ENCODE measurements at regions of chr1 and their contacts with region 1.

Region 1: GRCh38 chr1:66331657-66332547 is 202.1 kb upstream of the SGIP1 start:
- DNase-seq: peak; percentile 85
- ATAC-seq: peak; percentile 77
- H3K4me3 ChIP-seq: peak overlapping the region; percentile 55
- H3K27ac ChIP-seq: peak overlapping the region; percentile 86
- H3K4me1 ChIP-seq: peaks cover 7% of the 10 kb centered on the region
- H3K27me3 ChIP-seq: no peaks in the 10 kb centered on the region
- CTCF ChIP-seq: peak; percentile 35
- POLR2A ChIP-seq: peak; percentile 24; the same call in 1 of the 2 replicates
- RAD21 ChIP-seq: peak; percentile 7; the same call in 1 of the 2 replicates

Region 2: DNA sequence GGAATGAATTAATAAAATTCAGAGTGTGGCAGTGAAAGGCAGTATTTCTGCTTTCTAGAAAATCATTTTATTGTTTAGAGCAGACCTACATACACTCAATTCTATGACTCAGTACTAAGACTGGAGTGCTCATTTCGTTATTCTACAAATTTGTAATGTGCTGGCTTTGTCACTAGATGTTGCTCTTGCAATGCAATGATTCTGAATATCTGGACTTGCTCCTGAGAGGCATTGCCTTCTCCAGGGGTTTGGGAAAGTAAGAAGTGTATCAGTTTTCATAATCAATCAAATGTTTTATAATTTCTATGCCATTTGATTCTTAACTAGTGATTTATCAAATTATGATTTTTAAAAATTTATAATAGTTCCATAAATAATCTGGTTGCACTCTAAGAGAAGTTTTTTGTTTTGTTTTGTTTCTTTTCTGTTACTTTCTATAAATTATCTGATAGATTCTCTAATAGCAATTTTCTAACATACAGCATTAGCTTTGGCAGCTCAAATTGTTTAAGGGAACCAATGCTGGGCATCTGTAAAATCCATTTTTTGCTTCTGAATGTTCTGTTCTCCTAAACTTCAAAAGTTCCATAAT is 78.5 kb before region 1 on chr1:
- CTCF ChIA-PET with region 1: interaction called, 3 read pairs
- POLR2A ChIA-PET with region 1: no interaction called
- dilution Hi-C with region 1: no loop called
- in situ Hi-C with region 1: no loop called
- intact Hi-C with region 1: loop called (anchors 1 kb)
- DNase-seq: peak; percentile 85
- ATAC-seq: peak; percentile 96
- H3K4me3 ChIP-seq: no peak overlapping the region
- H3K27ac ChIP-seq: no peak overlapping the region
- H3K4me1 ChIP-seq: peaks cover 8% of the 10 kb centered on the region
- H3K27me3 ChIP-seq: no peaks in the 10 kb centered on the region
- CTCF ChIP-seq: peak; percentile 95
- POLR2A ChIP-seq: peak; percentile 45; the same call in 1 of the 2 replicates
- RAD21 ChIP-seq: peak; percentile 99

Region 3: DNA sequence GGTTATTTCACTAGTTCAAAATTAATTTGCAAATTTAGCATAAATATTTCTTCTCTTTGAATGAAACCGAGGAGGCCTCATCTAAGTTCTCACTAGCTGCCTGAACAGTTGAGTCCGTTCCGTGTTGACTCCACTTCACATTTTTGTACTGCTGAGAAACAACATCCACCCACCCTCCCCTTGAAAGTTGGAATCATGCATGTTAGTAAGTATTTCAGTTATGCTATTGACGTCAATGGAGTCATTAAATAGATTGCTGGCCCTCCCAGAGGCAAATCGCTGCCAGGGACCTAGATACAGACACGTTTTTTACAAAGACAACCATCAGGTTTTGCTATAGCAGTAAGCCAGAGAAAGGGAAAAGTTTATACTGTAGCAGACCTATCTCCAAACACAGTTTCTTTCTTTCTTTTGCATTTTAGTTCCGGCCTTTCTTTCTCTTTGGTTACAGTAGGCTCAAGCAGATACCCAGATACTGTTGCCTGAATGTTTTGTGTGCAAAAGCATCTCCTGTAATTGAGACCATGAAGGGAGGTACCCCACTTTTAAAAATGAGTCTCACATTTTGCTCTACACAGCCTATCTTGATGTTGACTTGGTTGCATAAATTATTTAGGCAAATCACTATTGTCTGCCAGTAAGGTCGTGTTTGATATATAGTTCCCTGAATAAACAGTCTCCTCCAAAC is 60.5 kb before region 1 on chr1:
- CTCF ChIA-PET with region 1: interaction called, 3 read pairs
- POLR2A ChIA-PET with region 1: interaction called, 5 read pairs
- dilution Hi-C with region 1: no loop called
- in situ Hi-C with region 1: loop called (anchors 5 kb)
- intact Hi-C with region 1: loop called (anchors 1 kb)
- DNase-seq: peak; percentile 99
- ATAC-seq: peak; percentile 84
- H3K4me3 ChIP-seq: peak overlapping the region; percentile 4; the same call in 1 of the 2 replicates
- H3K27ac ChIP-seq: peak overlapping the region; percentile 99
- H3K4me1 ChIP-seq: peaks cover 27% of the 10 kb centered on the region
- H3K27me3 ChIP-seq: no peaks in the 10 kb centered on the region
- CTCF ChIP-seq: no peak
- POLR2A ChIP-seq: peak; percentile 42; the same call in 1 of the 2 replicates
- RAD21 ChIP-seq: peak; percentile 23; the same call in 1 of the 2 replicates

Region 4: DNA sequence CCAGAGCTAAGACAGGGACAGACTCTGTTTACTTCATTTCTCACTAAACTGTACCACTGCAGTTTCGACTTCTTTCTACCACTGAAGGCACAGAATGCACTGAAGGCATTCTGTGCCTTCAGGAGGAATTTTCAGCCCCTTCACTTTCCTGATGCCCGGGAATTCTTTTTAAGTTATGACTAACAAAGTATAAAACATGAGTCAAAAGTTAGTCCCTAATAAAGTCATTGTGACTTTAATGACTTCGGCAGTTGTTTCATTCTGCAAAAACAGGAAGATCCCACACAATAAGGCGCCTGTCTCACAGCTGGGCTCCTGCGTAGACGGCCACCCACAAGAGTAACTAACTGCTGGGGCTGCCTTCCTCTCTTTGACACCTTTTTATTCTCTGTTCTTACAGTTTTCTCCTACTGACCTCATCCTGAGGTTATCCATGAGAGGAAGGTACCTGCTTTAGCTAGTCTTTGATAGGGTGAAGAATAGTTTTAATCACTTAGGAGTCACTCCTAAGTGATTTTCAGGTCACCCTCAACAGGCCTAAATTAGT is 18.2 kb after region 1 on chr1:
- CTCF ChIA-PET with region 1: interaction called, 3 read pairs
- POLR2A ChIA-PET with region 1: interaction called, 3 read pairs
- dilution Hi-C with region 1: no loop called
- in situ Hi-C with region 1: no loop called
- intact Hi-C with region 1: loop called (anchors 1 kb)
- DNase-seq: peak; percentile 34
- ATAC-seq: peak; percentile 33; the same call in 1 of the 2 replicates
- H3K4me3 ChIP-seq: no peak overlapping the region; the same call in 1 of the 2 replicates
- H3K27ac ChIP-seq: peak overlapping the region; percentile 47
- H3K4me1 ChIP-seq: peaks cover 19% of the 10 kb centered on the region
- H3K27me3 ChIP-seq: no peaks in the 10 kb centered on the region
- CTCF ChIP-seq: no peak
- POLR2A ChIP-seq: no peak
- RAD21 ChIP-seq: no peak

Region 5: GRCh38 chr1:66374561-66375111 is 42.7 kb after region 1 on chr1:
- CTCF ChIA-PET with region 1: no interaction called
- POLR2A ChIA-PET with region 1: no interaction called
- dilution Hi-C with region 1: no loop called
- in situ Hi-C with region 1: no loop called
- intact Hi-C with region 1: loop called (anchors 5 kb)
- DNase-seq: peak; percentile 95
- ATAC-seq: peak; percentile 66
- H3K4me3 ChIP-seq: no peak overlapping the region
- H3K27ac ChIP-seq: no peak overlapping the region
- H3K4me1 ChIP-seq: peaks cover 22% of the 10 kb centered on the region
- H3K27me3 ChIP-seq: no peaks in the 10 kb centered on the region
- CTCF ChIP-seq: no peak
- POLR2A ChIP-seq: no peak
- RAD21 ChIP-seq: no peak

Region 6: DNA sequence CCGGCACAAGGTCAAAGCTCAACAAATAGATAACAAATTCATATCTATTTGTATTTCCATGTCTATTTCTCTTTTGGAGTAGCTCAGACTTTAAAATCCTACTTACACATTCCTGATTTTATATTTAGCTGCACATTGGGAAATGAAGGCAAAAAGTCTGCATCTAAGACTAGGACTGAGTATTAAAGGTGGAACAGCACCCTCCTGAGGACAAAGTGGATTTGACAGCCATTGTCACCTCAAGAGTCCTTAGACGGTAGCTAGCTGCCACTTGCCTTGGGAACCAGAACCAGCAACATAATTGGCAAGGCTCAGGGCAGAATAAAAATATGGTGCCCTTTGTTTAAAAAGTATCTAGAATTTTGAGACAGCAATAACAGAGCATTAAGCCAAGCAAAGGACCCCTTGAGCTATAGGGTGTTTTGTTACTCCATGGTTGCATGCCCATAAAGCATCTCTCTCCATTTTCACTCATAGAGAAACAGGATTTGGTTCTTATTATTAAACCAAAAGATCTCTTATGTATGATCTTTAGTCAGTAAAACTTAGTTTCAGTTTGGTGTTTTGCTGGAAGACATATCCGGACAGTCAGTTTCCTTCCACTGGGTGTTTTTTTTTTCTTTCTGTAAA is 172.1 kb after region 1 on chr1:
- CTCF ChIA-PET with region 1: interaction called, 4 read pairs
- POLR2A ChIA-PET with region 1: no interaction called
- dilution Hi-C with region 1: no loop called
- in situ Hi-C with region 1: no loop called
- intact Hi-C with region 1: loop called (anchors 2 kb)
- DNase-seq: peak; percentile 81
- ATAC-seq: peak; percentile 87
- H3K4me3 ChIP-seq: no peak overlapping the region
- H3K27ac ChIP-seq: no peak overlapping the region
- H3K4me1 ChIP-seq: 0 out of 2 replicates have a peak, but pooled peaks cover 2% of the 10 kb centered on the region
- H3K27me3 ChIP-seq: no peaks in the 10 kb centered on the region
- CTCF ChIP-seq: peak; percentile 70
- POLR2A ChIP-seq: no peak
- RAD21 ChIP-seq: peak; percentile 86